Mammary epithelial cell (primary cell): ENCODE measurements at regions of chr12 and their contacts with region 1.

Region 1: GRCh38 chr12:72133497-72134055 is 138.6 kb upstream of the TRHDE start:
- DNase-seq: no peak
- H3K4me3 ChIP-seq: no peak overlapping the region
- H3K27ac ChIP-seq: no peak overlapping the region
- H3K4me1 ChIP-seq: no peaks in the 10 kb centered on the region
- H3K27me3 ChIP-seq: peaks cover 3% of the 10 kb centered on the region
- CTCF ChIP-seq: peak; percentile 14 to 30

Region 2: DNA sequence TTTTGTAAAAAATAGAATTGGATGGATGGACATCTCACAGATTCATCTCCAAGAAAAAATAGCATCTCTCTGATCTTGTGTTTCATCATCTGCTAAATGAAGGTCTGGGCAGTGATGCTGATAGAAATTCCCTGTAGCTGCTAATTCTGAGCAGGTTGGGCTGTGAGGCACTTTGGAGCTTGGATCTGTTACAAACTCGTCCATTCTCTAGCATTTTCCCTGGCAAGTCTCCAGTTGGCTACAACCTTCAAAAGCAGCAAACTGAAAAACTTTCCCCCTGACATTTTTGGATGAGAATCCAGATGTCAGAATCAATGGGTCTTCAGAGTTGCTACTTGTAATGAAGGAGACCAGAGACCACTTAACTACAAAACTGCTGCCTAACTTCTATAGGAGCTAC is 122.2 kb before region 1 on chr12:
- CTCF ChIA-PET with region 1: no interaction called
- dilution Hi-C with region 1: no loop called
- in situ Hi-C with region 1: no loop called
- intact Hi-C with region 1: no loop called
- DNase-seq: no peak
- H3K4me3 ChIP-seq: no peak overlapping the region
- H3K27ac ChIP-seq: no peak overlapping the region
- H3K4me1 ChIP-seq: no peaks in the 10 kb centered on the region
- H3K27me3 ChIP-seq: no peaks in the 10 kb centered on the region
- CTCF ChIP-seq: no peak

Region 3: DNA sequence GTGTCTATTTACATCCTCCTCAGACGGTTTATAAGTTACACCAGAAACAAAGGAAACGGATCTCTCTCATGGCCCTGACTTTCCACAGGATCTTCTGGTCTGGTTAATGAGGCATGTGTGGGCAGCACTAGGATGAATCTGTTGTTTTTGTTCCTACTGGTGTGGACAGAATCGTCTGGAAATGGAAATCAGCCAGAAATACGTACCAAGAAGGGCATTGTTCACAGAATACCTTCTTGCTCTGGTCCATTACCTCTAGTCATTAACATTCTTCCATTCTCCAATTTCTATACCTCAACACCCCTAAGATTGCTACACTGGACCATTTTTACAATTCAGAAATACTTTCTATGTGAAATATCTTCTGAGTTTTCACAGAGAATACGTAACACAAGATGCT is 109.0 kb before region 1 on chr12:
- CTCF ChIA-PET with region 1: no interaction called
- dilution Hi-C with region 1: loop called (anchors 5 kb)
- in situ Hi-C with region 1: no loop called
- intact Hi-C with region 1: no loop called
- DNase-seq: peak; percentile 70
- H3K4me3 ChIP-seq: no peak overlapping the region
- H3K27ac ChIP-seq: peak overlapping the region; percentile 78
- H3K4me1 ChIP-seq: peaks cover 30% of the 10 kb centered on the region
- H3K27me3 ChIP-seq: no peaks in the 10 kb centered on the region
- CTCF ChIP-seq: no peak